Sigmoid colon (tissue), 7 donors: ENCODE measurements at regions of chr20 and their contacts with region 1.

Region 1: DNA sequence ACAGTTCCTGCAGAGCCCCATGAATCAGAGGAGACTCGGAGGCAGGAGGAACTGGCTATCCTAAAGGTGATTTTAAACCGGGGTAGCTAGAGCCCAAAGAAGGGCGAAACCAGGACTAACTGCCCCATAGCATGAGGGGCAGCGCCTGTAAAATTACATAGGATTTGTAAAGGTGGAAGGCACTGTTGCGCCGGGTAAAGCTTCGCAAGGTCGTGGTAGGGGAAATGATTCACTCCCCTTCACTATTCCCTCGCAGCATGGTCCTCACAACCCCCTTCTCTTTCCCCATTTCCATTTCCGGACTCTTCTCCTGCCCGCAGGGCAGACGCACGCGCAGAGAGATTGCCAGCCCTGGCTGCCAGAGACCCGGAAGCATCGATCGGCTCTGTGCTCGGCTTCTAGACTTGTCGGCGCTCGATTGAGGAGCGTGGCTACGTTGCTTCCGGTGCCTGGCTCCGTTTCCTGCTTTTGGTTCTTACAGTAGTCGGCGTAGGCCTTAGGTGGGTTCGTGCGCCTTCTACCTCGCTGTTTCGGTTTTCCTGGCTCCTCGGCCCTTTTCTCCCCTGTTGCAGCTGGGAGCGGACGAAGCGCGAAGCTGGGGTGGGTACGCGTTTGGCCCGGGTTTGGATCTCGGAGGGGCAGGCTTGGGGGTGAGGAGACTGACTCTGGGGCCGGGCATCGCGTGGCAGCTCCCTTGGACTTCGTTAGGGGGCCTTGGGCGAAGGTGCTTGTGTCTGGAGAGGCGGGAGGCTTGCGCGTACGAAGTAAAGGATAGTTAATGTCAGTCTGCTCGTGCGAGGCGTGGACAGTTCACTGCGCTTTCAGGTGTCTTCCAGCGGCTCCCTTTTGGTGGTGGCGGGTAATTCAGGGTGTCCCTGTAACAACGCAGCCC is at the start of gene SNRPB2:
- DNase-seq: peak; percentile 96
- H3K4me3 ChIP-seq: peak within 1 kb of the TSS; percentile 86 to 96 (median 92)
- H3K27ac ChIP-seq: peak within 1 kb of the TSS; percentile 74 to 88 (median 83)
- H3K4me1 ChIP-seq: peaks cover 0 to 25% (median 19%) of the 10 kb centered on the region in 4 donors
- H3K27me3 ChIP-seq: peaks cover 0 to 13% (median 0%) of the 10 kb centered on the region in 3 donors
- CTCF ChIP-seq: no peak
- EP300 ChIP-seq: peak in 1 of 4 donors; percentile 7
- POLR2A ChIP-seq: peak; percentile 12 to 43
- total RNA-seq, gene SNRPB2: 18.6 to 35.7 (median 30.5) TPM

Region 2: GRCh38 chr20:16573001-16573965 is 156.5 kb before region 1 on chr20 and contains the start of gene KIF16B:
- intact Hi-C with region 1: loop called (anchors 1 kb)
- DNase-seq: peak; percentile 96
- H3K4me3 ChIP-seq: peak within 1 kb of the TSS; percentile 74 to 94 (median 82)
- H3K27ac ChIP-seq: peak within 1 kb of the TSS; percentile 70 to 85 (median 80)
- H3K4me1 ChIP-seq: peaks cover 0 to 34% (median 29%) of the 10 kb centered on the region in 4 donors
- H3K27me3 ChIP-seq: no peaks in the 10 kb centered on the region
- CTCF ChIP-seq: no peak
- EP300 ChIP-seq: no peak
- POLR2A ChIP-seq: peak in 1 of 2 donors; percentile 53
- total RNA-seq, gene KIF16B: 18.9 to 22.4 (median 21.5) TPM